GM12878 (cell line): ENCODE measurements at regions of chr10 and their contacts with region 1.

Region 1: GRCh38 chr10:70815504-70816219 is at the start of gene SGPL1:
- DNase-seq: peak; percentile 13
- ATAC-seq: peak; percentile 92
- H3K4me3 ChIP-seq: peak within 1 kb of the TSS; percentile 94
- H3K27ac ChIP-seq: no peak within 1 kb of the TSS
- H3K4me1 ChIP-seq: no peaks in the 10 kb centered on the region
- H3K27me3 ChIP-seq: no peaks in the 10 kb centered on the region
- CTCF ChIP-seq: peak; percentile 93 to 99 (median 99); a peak in 5 of 6 replicates
- EP300 ChIP-seq: no peak
- POLR2A ChIP-seq: peak; percentile 85
- RAD21 ChIP-seq: peak; percentile 89
- polyA plus RNA-seq, gene SGPL1: 4.9 to 10.3 TPM

Region 2: DNA sequence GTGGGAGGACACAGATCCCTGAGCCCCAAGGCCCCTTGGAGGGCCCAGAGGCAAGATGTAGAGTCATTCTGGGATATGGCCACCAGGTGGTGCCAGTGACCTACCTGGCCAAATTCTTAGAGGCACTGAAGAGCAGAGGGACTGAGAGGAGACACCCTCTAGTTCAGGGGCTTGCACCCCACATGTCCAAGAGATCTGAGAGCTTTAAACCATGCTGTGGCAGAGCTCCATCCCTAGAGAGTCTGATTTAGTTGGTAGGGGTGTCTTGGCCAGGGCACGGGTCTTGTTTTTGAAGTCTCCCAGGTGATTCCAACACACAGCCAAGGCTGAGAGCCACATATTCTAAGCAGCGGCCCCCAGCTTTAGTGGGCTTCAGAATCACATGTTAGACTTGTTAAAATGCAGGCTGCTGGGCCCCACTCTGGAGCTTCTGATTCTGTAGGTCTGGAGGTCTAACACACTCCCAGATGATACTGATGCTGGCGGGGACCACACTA is 265.7 kb before region 1 on chr10:
- CTCF ChIA-PET with region 1: interaction called, 5 read pairs
- POLR2A ChIA-PET with region 1: no interaction called
- RAD21 ChIA-PET with region 1: no interaction called
- SMC1A ChIA-PET with region 1: no interaction called
- in situ Hi-C with region 1: no loop called
- intact Hi-C with region 1: loop called (anchors 2 kb)
- DNase-seq: peak; percentile 17
- ATAC-seq: peak; percentile 97
- H3K4me3 ChIP-seq: no peak overlapping the region
- H3K27ac ChIP-seq: no peak overlapping the region
- H3K4me1 ChIP-seq: no peaks in the 10 kb centered on the region
- H3K27me3 ChIP-seq: no peaks in the 10 kb centered on the region
- CTCF ChIP-seq: peak; percentile 87 to 91 (median 91)
- EP300 ChIP-seq: no peak
- POLR2A ChIP-seq: no peak
- RAD21 ChIP-seq: peak; percentile 99

Region 3: DNA sequence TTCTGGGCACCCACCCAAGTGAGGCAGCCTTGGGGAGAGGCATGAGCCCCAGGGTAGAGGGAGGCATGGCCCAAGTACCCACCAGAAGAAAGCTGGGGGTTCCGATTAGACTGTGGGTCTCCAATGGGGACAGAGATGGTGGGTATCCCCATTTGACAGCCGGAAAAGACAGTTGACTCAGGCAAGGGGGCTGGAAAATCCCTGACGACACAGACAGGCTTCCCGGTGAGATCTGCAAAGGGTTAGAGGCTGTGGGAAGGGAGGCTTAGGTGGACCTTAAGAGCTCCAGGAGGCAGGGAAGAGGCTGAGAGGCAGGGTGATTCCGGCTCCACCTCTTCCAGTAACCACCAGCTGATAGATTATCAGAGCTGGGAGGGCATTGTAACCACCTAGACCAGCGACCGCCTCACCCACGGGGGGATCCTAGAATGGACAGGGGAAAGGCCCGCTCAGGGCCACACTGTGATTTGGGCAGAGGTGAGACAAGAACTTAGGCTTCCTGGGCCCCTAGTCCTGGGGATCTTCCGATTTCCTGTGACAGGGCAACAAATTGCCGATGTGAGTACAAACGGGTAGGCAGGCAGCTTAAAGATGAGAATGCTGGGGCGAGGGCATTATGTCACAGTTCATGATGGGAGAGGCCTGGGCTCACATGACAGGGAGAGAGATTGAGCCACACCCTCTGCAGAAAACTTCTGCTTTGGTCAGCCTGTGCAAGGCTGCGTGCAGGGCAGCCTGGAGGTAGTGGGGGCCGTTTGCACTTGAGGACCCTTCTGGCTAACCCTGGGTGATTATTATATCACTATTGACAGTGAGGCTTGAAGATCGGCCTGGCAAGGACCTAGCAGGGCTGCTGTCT is 35.9 kb before region 1 on chr10:
- CTCF ChIA-PET with region 1: no interaction called
- POLR2A ChIA-PET with region 1: no interaction called
- RAD21 ChIA-PET with region 1: no interaction called
- SMC1A ChIA-PET with region 1: no interaction called
- in situ Hi-C with region 1: no loop called
- intact Hi-C with region 1: no loop called
- DNase-seq: no peak
- ATAC-seq: no peak
- H3K4me3 ChIP-seq: no peak overlapping the region
- H3K27ac ChIP-seq: no peak overlapping the region
- H3K4me1 ChIP-seq: no peaks in the 10 kb centered on the region
- H3K27me3 ChIP-seq: no peaks in the 10 kb centered on the region; a peak in 2 of 4 replicates
- CTCF ChIP-seq: no peak
- EP300 ChIP-seq: no peak
- POLR2A ChIP-seq: no peak
- RAD21 ChIP-seq: no peak

Region 4: DNA sequence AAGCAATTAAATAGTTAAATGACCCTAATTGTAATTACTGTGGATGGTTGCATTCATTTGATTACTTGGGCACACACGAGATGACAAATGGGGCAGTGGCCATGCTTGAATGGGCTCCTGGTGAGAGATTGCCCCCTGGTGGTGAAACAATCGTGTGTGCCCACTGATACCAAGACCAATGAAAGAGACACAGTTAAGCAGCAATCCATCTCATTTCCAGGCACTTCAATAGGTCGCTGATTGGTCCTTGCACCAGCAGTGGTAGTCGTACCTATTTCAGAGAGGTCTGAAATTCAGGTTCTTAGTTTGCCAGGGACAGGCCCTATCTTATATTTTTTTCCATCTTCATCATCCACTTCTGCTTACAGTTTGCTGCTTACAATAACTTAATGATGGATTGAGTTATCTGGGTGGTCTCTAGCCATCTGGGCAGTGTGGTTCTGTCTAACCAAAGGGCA is 64.4 kb after region 1 on chr10:
- CTCF ChIA-PET with region 1: interaction called, 8 read pairs
- POLR2A ChIA-PET with region 1: no interaction called
- RAD21 ChIA-PET with region 1: interaction called, 4 read pairs
- SMC1A ChIA-PET with region 1: interaction called, 5 read pairs
- in situ Hi-C with region 1: loop called (anchors 5 kb)
- intact Hi-C with region 1: loop called (anchors 1 kb)
- DNase-seq: peak; percentile 32
- ATAC-seq: peak; percentile 100
- H3K4me3 ChIP-seq: no peak overlapping the region
- H3K27ac ChIP-seq: no peak overlapping the region
- H3K4me1 ChIP-seq: no peaks in the 10 kb centered on the region
- H3K27me3 ChIP-seq: no peaks in the 10 kb centered on the region
- CTCF ChIP-seq: peak; percentile 85 to 92 (median 89); a peak in 5 of 6 replicates
- EP300 ChIP-seq: no peak
- POLR2A ChIP-seq: no peak
- RAD21 ChIP-seq: peak; percentile 90

Region 5: GRCh38 chr10:70931168-70931815 is 115.6 kb after region 1 on chr10:
- CTCF ChIA-PET with region 1: no interaction called
- POLR2A ChIA-PET with region 1: no interaction called
- RAD21 ChIA-PET with region 1: no interaction called
- SMC1A ChIA-PET with region 1: no interaction called
- in situ Hi-C with region 1: no loop called
- intact Hi-C with region 1: no loop called
- DNase-seq: no peak
- ATAC-seq: no peak
- H3K4me3 ChIP-seq: no peak overlapping the region
- H3K27ac ChIP-seq: no peak overlapping the region
- H3K4me1 ChIP-seq: no peaks in the 10 kb centered on the region
- H3K27me3 ChIP-seq: peaks cover 0 to 4% of the 10 kb centered on the region in 2 experiments; a peak in 3 of 4 replicates
- CTCF ChIP-seq: no peak
- EP300 ChIP-seq: no peak
- POLR2A ChIP-seq: no peak
- RAD21 ChIP-seq: no peak